ENCODE measurements at regions of chr3 and their contacts with region 1.

Region 1: GRCh38 chr3:149473357-149474249 is 894 bp upstream of the TM4SF4 start:
- DNase-seq: peak; percentile 30 to 88
- H3K4me3 ChIP-seq: no peak overlapping the region
- H3K27ac ChIP-seq: peak overlapping the region; percentile 67 to 72
- H3K4me1 ChIP-seq: peaks cover 6 to 24% of the 10 kb centered on the region in 2 donors
- H3K27me3 ChIP-seq: no peaks in the 10 kb centered on the region
- CTCF ChIP-seq: no peak

Region 2: GRCh38 chr3:149129326-149130205 is 344.0 kb before region 1 on chr3 and contains the start of gene HPS3:
- intact Hi-C with region 1: loop called (anchors 5 kb)
- DNase-seq: peak; percentile 76 to 96
- H3K4me3 ChIP-seq: peak within 1 kb of the TSS; percentile 73 to 94
- H3K27ac ChIP-seq: peak within 1 kb of the TSS; percentile 87 to 89
- H3K4me1 ChIP-seq: peaks cover 0 to 12% of the 10 kb centered on the region in 2 donors
- H3K27me3 ChIP-seq: no peaks in the 10 kb centered on the region
- CTCF ChIP-seq: peak in 1 of 3 experiments; percentile 22
- total RNA-seq, gene HPS3: 18.9 TPM

Region 3: GRCh38 chr3:149299938-149300791 is 173.4 kb before region 1 on chr3:
- intact Hi-C with region 1: loop called (anchors 5 kb)
- DNase-seq: peak in 1 of 2 donors; percentile 78
- H3K4me3 ChIP-seq: no peak overlapping the region
- H3K27ac ChIP-seq: peak overlapping the region; percentile 61 to 78
- H3K4me1 ChIP-seq: peaks cover 12 to 25% of the 10 kb centered on the region in 2 donors
- H3K27me3 ChIP-seq: no peaks in the 10 kb centered on the region
- CTCF ChIP-seq: no peak

Region 4: DNA sequence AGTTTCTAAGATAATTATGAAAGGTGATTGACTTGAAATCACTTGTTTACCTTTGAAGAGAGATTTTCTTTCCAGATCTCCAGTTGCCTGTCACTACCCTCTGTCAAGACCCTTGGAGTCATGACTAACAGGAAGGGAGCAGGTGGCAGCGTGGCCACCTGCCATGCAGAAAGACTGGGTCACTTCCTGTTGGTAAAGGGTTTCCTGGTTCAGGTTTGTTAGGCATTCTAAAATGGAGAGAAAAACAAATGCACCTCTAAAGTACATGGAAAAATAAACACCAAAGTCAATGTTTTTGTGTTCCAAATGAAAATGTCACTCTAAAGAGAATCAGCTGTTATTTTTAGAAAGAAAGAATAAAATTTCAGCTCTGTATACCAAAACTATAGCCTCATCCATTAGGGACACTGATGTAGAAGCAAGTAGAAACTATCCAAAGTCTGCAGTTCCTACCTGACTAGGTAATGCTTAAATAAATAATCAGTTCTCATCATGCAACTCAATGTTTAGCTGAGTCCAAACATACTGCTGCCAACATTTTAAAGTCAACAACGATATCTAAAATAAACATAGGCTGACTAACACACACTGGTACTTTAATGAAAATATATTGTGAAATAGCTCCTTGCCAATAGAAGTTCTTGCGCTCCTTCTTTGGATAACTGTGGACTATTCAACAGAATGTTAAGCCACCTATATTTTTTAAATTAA is 72.2 kb before region 1 on chr3:
- intact Hi-C with region 1: loop called (anchors 2 kb)
- DNase-seq: no peak
- H3K4me3 ChIP-seq: no peak overlapping the region
- H3K27ac ChIP-seq: peak overlapping the region; percentile 79 to 89
- H3K4me1 ChIP-seq: peaks cover 0 to 11% of the 10 kb centered on the region in 2 donors
- H3K27me3 ChIP-seq: no peaks in the 10 kb centered on the region
- CTCF ChIP-seq: no peak

Measured in ascending aorta (tissue), 2 donors.